Activated T-helper 1 cell treated with anti-CD3 and anti-CD28 coated beads, Interleukin-12 subunit alpha, Interleukin-12 subunit beta, Interleukin-2, Interleukin-4 antibody, amounts not matched to agents 30 ng/mL and 10 ng/mL and 1 ng/mL, durations not matched to agents 14 hours and 24 hours and 36 hours (primary cell): ENCODE measurements at regions of chr1 and their contacts with region 1.

Region 1: DNA sequence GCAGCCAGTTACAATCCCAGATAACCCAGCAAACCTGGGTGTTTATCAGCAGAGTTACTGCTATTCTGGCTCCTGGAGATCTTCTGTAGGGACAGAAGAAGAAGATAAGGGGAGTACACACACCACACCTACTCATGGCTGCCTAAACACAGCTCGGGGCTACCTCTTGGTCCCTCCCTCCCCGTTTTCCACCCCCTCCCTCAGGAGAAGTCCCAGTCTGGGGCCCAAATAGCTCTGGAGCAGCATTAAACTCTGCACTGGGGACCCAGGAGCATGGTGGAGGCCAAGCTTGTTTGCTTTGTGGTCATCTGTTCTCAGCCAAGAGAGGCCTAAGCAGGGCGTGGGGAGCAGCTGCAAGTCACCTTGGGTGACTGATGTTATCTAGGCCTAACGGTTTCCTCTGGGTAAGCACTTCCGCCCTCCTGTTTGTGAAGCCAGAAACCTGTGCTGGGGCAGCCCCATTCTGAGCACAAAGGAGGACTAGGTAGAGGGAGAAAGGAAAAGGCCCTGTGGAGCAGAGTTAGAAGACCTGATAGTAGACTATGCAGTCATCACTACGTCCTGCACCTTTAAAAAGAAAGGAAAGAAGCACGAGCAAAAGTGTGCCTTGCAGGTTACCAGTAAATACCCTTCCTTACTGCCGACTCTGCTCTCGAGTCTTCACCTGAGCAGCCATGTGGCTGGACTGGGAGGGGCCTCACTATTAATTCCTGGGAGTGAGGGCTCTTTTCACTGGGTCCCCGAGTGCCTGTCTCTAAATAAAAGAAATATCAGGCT is 2.0 kb upstream of the RCSD1 start:
- DNase-seq: peak; percentile 82
- H3K4me3 Mint-ChIP-seq: peak overlapping the region; percentile 85
- H3K27ac Mint-ChIP-seq: peak overlapping the region; percentile 89
- H3K4me1 Mint-ChIP-seq: peaks cover 70% of the 10 kb centered on the region
- H3K27me3 Mint-ChIP-seq: no peaks in the 10 kb centered on the region

Region 2: GRCh38 chr1:166410083-166410385 is 1218.0 kb before region 1 on chr1:
- intact Hi-C with region 1: no loop called
- DNase-seq: no peak
- H3K4me3 Mint-ChIP-seq: no peak overlapping the region
- H3K27ac Mint-ChIP-seq: no peak overlapping the region
- H3K4me1 Mint-ChIP-seq: no peaks in the 10 kb centered on the region
- H3K27me3 Mint-ChIP-seq: no peaks in the 10 kb centered on the region

Region 3: GRCh38 chr1:167447521-167448136 is 180.4 kb before region 1 on chr1:
- intact Hi-C with region 1: loop called (anchors 5 kb)
- DNase-seq: peak; percentile 70
- H3K4me3 Mint-ChIP-seq: peak overlapping the region; percentile 68
- H3K27ac Mint-ChIP-seq: peak overlapping the region; percentile 90
- H3K4me1 Mint-ChIP-seq: peaks cover 77% of the 10 kb centered on the region
- H3K27me3 Mint-ChIP-seq: no peaks in the 10 kb centered on the region

Region 4: DNA sequence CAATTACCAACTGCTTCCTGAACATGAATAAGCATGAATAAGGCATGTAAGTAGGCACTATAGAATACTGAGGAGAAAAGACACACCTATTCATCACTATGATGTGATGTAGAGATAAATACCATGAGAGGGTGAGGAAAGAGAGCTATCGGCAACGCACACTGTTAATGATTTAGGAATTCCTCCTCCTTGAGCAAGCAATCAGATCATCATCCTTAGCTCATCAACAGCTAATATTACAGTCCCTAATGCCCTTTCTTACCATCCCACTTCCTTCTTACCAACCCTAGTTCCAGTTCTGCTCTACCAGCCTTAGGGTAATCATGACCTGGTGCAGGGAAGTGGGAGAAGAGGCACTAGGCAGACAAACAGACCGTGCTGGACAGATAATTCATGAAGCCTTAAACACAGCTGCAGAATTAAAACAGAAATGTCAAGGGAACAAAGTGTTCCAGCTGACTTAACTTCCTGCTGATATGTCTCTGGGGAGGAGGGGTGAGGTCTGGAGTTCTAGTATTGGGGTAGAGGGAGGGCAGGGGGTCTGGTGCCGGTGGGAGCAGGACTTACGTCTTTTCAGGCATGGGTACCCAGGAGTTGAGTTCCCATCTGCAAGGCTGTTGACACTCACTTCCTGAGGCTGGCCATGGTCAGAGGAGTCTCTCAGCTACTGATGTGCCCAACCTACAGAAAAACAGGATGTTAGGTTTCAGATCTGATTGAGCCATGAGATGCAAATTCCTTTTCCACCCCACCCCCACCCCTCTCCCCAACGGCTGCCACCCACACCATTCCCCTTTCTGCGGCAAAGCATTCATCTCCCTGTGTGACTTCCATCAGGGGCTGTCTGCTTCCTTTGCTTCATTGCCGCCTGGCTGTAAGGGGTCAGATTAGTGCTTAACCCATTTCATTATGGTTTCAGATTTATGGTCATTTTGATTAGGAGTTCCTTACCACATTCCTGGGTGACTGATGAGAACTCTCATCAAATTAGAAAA is 10.6 kb before region 1 on chr1:
- intact Hi-C with region 1: loop called (anchors 1 kb)
- DNase-seq: no peak
- H3K4me3 Mint-ChIP-seq: peak overlapping the region; percentile 81
- H3K27ac Mint-ChIP-seq: peak overlapping the region; percentile 95
- H3K4me1 Mint-ChIP-seq: peaks cover 65% of the 10 kb centered on the region
- H3K27me3 Mint-ChIP-seq: no peaks in the 10 kb centered on the region

Region 5: GRCh38 chr1:167715157-167715999 is 87.3 kb after region 1 on chr1:
- intact Hi-C with region 1: loop called (anchors 2 kb)
- DNase-seq: peak; percentile 84
- H3K4me3 Mint-ChIP-seq: peak overlapping the region; percentile 96
- H3K27ac Mint-ChIP-seq: peak overlapping the region; percentile 91
- H3K4me1 Mint-ChIP-seq: peaks cover 61% of the 10 kb centered on the region
- H3K27me3 Mint-ChIP-seq: peaks cover 21% of the 10 kb centered on the region

Region 6: DNA sequence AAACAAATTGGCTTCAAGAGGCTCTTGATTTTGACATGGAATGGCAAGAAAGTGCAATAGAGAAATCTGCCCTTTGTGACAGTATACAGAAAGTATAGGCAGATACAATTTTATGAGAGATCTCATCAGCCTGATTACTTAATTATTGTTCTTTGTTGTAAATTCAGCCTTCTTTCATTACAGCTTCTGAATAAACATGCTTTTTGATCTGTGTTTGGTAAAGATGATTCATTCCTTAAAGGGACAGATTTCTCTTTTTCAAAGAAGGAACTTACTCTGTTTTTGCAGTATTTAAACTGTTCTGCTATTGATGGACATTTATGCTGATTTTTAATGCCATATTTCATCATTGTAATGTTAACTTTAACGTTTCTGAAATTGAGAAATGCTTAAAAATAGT is 322.5 kb after region 1 on chr1:
- intact Hi-C with region 1: no loop called
- DNase-seq: no peak
- H3K4me3 Mint-ChIP-seq: no peak overlapping the region
- H3K27ac Mint-ChIP-seq: no peak overlapping the region
- H3K4me1 Mint-ChIP-seq: peaks cover 24% of the 10 kb centered on the region
- H3K27me3 Mint-ChIP-seq: no peaks in the 10 kb centered on the region